Posterior vena cava (tissue), 2 donors: ENCODE measurements at regions of chr16 and their contacts with region 1.

Region 1: GRCh38 chr16:69112285-69113129 is 7.1 kb downstream of the HAS3 start:
- DNase-seq: peak; percentile 86

Region 2: GRCh38 chr16:68851601-68852000 is 260.9 kb before region 1 on chr16:
- intact Hi-C with region 1: loop called (anchors 5 to 10 kb)
- DNase-seq: no peak

Region 3: DNA sequence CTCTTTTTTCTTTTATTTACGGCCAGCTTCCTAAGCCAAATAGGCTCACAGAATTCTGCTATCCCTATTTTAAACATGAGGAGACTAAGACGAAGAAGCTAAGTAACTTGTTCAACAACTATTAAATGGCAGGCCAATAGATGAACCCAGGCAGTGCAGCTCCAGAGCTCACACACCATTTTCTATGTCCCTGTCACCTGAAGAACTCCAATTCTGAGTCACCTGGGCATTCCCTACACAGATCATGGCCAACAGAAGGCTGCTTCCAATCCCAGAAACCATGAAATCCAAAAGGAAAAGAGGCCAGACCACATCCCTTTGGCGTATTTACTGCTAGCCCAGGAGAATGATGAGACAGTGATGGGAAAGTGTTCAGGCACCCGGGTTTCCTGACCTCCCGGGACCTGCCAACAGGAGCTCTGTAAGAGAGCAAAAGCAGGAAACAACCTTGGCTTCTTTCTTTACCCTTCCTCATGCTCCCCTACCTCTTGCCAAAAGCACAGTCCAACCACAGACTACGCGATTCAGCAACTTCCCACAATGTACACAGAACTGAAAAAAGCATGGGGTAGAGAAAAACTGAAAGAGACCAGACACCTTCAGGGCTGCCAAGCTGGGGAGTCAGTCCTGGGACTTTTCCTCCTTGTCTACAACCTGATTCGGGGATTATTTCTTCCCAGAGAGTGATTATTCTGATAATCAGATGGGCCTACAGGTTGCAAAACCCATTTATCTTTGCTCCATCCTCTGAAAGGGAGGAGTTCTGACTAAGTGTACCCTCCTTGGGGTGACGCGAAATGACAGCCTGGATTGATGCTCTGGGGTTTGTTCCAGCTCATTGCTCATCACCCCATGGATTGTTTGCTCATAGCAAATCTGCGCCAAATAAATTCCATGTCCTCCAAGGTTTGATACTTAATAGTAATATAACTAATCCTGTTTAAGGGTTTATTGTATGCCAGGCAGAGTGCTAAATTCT is 54.8 kb before region 1 on chr16:
- intact Hi-C with region 1: no loop called
- DNase-seq: no peak

Region 4: GRCh38 chr16:69100071-69100691 is 12.3 kb before region 1 on chr16:
- intact Hi-C with region 1: no loop called
- DNase-seq: no peak